AG04450 (cell line): ENCODE measurements at regions of chr9 and their contacts with region 1.

Region 1: DNA sequence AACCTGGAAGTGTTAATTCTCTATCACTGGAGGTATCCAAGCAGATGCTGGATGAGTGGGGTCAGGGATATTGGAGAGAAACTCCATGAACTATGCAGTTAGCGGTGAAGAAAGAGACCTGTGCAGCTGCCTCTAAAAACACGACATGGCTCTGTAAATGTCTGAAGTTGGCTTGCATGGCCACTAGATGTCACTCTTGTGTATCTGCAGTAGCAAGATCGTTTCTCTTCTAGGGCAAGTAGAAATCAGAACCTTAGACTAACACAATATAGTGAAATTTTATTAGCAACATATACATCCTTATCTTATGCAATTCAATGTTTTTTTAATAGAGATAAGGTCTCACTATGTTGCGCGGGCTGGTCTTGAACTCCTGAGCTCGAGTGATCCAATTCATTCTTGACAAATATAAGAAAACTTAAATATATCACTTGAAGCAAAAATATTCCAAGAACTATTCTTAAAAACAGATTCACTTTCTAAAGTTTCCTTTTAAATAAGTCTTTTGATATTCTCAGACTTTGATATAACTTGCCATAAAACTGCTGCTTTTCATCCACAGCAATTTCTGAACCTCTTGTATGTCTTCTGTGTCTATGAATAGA is 2.9 kb downstream of the OR2S2 start:
- DNase-seq: peak; percentile 78
- H3K4me3 ChIP-seq: no peak overlapping the region
- H3K27ac ChIP-seq: no peak overlapping the region
- H3K27me3 ChIP-seq: no peaks in the 10 kb centered on the region
- CTCF ChIP-seq: peak; percentile 91

Region 2: DNA sequence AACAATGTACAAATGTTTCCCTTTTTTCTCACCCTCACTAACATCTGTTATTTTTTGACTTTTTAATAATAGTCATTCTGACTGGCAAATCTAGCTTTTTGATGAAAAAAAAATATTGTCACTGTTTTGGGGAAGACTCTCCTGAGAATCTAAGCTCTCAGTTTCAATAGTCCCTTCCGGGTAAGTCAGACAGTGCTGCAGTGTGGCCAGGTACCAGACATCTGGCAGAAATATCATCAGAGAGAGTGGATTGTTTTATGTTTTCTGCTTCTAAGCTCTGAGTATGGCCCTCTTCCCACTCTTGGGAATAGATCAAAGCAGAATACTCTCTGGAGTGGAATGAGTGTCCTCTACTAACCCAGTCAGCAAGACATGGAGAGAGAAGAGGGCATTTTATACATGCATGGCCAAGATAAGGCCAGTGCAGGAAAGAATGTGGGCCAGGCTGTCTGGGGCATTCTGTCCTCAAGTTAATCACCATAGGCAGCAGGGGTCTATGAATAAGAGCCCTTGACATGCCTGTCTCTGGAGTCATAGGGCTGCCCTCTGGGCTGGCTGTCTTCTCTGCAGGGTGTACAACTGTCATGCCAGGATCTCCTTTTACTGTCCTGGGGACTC is 41.4 kb after region 1 on chr9:
- CTCF ChIA-PET with region 1: interaction called, 10 read pairs
- POLR2A ChIA-PET with region 1: no interaction called
- DNase-seq: no peak
- H3K4me3 ChIP-seq: no peak overlapping the region
- H3K27ac ChIP-seq: no peak overlapping the region
- H3K27me3 ChIP-seq: no peaks in the 10 kb centered on the region
- CTCF ChIP-seq: no peak

Region 3: DNA sequence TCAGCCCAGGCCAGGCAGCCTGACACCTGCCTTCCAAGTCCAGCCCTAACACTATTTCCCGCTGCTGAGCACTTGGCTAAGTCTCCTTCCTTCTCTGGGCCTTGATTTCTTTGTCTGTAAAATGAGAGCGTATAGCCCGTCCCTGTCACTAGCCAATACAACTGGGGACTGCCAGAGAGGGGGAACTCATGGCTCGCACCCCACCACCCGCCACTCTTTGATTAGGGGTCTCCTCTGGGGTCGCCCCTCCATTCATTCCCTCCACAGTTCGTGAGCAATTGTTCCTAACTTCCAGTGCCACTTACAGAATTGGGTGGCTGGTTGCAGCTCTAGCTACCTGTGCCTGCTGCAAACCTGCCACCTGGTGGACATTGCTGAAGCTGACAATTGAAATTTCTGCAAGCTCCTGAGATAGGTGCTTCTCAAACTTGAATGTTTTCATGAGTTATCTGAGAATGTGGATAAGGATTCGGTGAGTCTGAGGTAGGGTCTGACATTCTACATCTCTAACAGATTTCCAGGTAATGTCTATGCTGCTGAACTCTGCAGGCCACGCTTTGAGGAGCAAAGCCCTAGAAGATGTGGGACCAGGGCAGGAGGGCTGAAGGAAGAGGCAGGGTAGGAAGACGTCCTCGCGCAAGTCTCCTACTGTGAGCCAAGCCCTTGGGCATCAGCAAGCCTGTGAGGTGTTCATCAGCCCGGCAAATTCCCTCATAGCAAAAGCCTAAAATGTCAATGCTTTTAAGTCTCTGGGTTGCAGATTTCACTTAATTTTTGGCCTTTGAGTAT is 68.4 kb after region 1 on chr9:
- CTCF ChIA-PET with region 1: interaction called, 61 read pairs
- POLR2A ChIA-PET with region 1: interaction called, 4 read pairs
- DNase-seq: no peak
- H3K4me3 ChIP-seq: no peak overlapping the region
- H3K27ac ChIP-seq: no peak overlapping the region
- H3K27me3 ChIP-seq: no peaks in the 10 kb centered on the region
- CTCF ChIP-seq: peak; percentile 87

Region 4: DNA sequence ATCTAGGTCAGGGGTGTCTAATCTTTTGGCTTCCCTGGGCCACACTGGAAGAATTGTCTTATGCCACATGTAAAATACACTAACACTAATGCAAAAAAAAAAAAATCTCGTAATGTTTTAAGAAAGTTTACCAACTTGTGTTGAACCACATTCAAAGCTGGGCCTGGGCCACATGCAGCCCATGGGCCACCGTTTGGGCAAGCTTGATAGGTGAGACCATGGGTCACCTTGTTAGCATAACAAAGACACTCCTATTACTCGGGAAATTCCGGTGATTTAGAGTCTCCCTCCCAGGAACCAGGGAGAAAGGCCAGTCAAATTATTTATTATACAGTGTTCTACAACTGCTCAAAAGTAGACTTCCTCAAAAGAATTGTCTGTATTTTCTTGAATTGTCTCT is 94.4 kb after region 1 on chr9:
- CTCF ChIA-PET with region 1: no interaction called
- POLR2A ChIA-PET with region 1: no interaction called
- DNase-seq: no peak
- H3K4me3 ChIP-seq: no peak overlapping the region
- H3K27ac ChIP-seq: no peak overlapping the region
- H3K27me3 ChIP-seq: no peaks in the 10 kb centered on the region
- CTCF ChIP-seq: no peak

Region 5: GRCh38 chr9:36166101-36166927 is 211.3 kb after region 1 on chr9:
- CTCF ChIA-PET with region 1: interaction called, 18 read pairs
- POLR2A ChIA-PET with region 1: interaction called, 7 read pairs
- DNase-seq: no peak
- H3K4me3 ChIP-seq: peak overlapping the region; percentile 63
- H3K27ac ChIP-seq: peak overlapping the region; percentile 57
- H3K27me3 ChIP-seq: no peaks in the 10 kb centered on the region
- CTCF ChIP-seq: peak; percentile 84

Region 6: GRCh38 chr9:36328798-36329411 is 373.9 kb after region 1 on chr9:
- CTCF ChIA-PET with region 1: interaction called, 12 read pairs
- POLR2A ChIA-PET with region 1: no interaction called
- DNase-seq: peak; percentile 64
- H3K4me3 ChIP-seq: no peak overlapping the region
- H3K27ac ChIP-seq: no peak overlapping the region
- H3K27me3 ChIP-seq: no peaks in the 10 kb centered on the region
- CTCF ChIP-seq: peak; percentile 75